ENCODE measurements at regions of chr1 and their contacts with region 1.

Region 1: GRCh38 chr1:42657971-42658879 is at the start of gene PPIH:
- DNase-seq: peak; percentile 94
- H3K4me3 Mint-ChIP-seq: peak within 1 kb of the TSS; percentile 99
- H3K27ac Mint-ChIP-seq: peak within 1 kb of the TSS; percentile 96
- H3K4me1 Mint-ChIP-seq: peaks cover 46% of the 10 kb centered on the region
- H3K27me3 Mint-ChIP-seq: peaks cover 3% of the 10 kb centered on the region
- total RNA-seq, gene PPIH: 89.7 and 94.6 TPM in 2 replicates

Region 2: GRCh38 chr1:42146626-42147320 is 511.5 kb before region 1 on chr1:
- intact Hi-C with region 1: loop called (anchors 5 kb)
- DNase-seq: peak; percentile 56
- H3K4me3 Mint-ChIP-seq: no peak overlapping the region
- H3K27ac Mint-ChIP-seq: no peak overlapping the region
- H3K4me1 Mint-ChIP-seq: no peaks in the 10 kb centered on the region
- H3K27me3 Mint-ChIP-seq: no peaks in the 10 kb centered on the region

Region 3: DNA sequence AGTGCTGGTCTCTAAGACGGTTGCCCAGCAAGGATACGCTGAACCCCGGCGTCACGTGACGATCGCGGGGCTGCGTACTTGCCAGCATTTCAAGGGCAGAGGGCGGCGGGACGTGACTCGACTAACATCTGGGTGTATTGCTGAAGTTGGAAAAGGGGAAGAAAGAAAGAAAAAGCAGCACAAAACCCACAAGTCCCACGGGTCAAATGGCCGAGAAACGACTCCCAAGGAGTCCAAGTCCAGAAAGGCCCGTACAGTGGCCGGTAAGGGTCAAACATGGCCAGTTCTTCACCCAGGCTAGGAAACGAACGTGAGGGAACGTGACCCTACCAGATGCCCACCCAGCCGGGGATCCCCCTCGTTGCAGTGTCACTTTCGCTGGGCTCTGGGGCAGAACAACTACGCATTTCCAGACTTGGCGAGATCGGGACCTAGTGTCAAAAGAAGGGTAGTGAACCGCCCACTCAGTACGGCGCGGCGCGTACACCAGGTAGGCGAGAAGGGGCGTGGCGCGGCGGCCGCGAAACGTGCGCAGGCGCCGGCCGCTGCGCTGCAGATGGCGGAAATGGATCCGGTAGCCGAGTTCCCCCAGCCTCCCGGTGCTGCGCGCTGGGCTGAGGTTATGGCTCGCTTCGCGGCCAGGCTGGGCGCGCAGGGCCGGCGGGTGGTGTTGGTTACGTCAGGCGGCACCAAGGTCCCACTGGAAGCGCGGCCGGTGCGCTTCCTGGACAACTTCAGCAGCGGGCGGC is 202.0 kb before region 1 on chr1 and contains the starts of genes PPCS and ZMYND12:
- intact Hi-C with region 1: loop called (anchors 1 kb)
- DNase-seq: peak; percentile 87
- H3K4me3 Mint-ChIP-seq: peak within 1 kb of the TSS; percentile 95
- H3K27ac Mint-ChIP-seq: peak within 1 kb of the TSS; percentile 98
- H3K4me1 Mint-ChIP-seq: peaks cover 28% of the 10 kb centered on the region
- H3K27me3 Mint-ChIP-seq: no peaks in the 10 kb centered on the region
- total RNA-seq, gene PPCS: 40.1 and 48.0 TPM in 2 replicates
- total RNA-seq, gene ZMYND12: not detected in 2 replicates

Region 4: GRCh38 chr1:42646056-42646455 is 12.2 kb before region 1 on chr1:
- intact Hi-C with region 1: no loop called
- DNase-seq: no peak
- H3K4me3 Mint-ChIP-seq: no peak overlapping the region
- H3K27ac Mint-ChIP-seq: no peak overlapping the region
- H3K4me1 Mint-ChIP-seq: no peaks in the 10 kb centered on the region
- H3K27me3 Mint-ChIP-seq: peaks cover 15% of the 10 kb centered on the region

Region 5: GRCh38 chr1:42816585-42817434 is 158.6 kb after region 1 on chr1 and contains the starts of genes ERMAP and SVBP:
- intact Hi-C with region 1: loop called (anchors 2 kb)
- DNase-seq: peak; percentile 90
- H3K4me3 Mint-ChIP-seq: peak within 1 kb of the TSS; percentile 79
- H3K27ac Mint-ChIP-seq: peak within 1 kb of the TSS; percentile 80
- H3K4me1 Mint-ChIP-seq: peaks cover 19% of the 10 kb centered on the region
- H3K27me3 Mint-ChIP-seq: no peaks in the 10 kb centered on the region
- total RNA-seq, gene ERMAP: 3.4 and 3.7 TPM in 2 replicates
- total RNA-seq, gene SVBP: 6.4 and 8.2 TPM in 2 replicates

Region 6: GRCh38 chr1:42846257-42847110 is 188.3 kb after region 1 on chr1 and contains the start of gene ZNF691:
- intact Hi-C with region 1: loop called (anchors 1 kb)
- DNase-seq: peak; percentile 86
- H3K4me3 Mint-ChIP-seq: peak within 1 kb of the TSS; percentile 97
- H3K27ac Mint-ChIP-seq: peak within 1 kb of the TSS; percentile 78
- H3K4me1 Mint-ChIP-seq: peaks cover 41% of the 10 kb centered on the region
- H3K27me3 Mint-ChIP-seq: no peaks in the 10 kb centered on the region
- total RNA-seq, gene ZNF691: 10.0 and 12.9 TPM in 2 replicates

Region 7: GRCh38 chr1:43197346-43198127 is 539.3 kb after region 1 on chr1:
- intact Hi-C with region 1: no loop called
- DNase-seq: no peak
- H3K4me3 Mint-ChIP-seq: no peak overlapping the region
- H3K27ac Mint-ChIP-seq: no peak overlapping the region
- H3K4me1 Mint-ChIP-seq: no peaks in the 10 kb centered on the region
- H3K27me3 Mint-ChIP-seq: no peaks in the 10 kb centered on the region

Measured in activated T-helper 1 cell treated with anti-CD3 and anti-CD28 coated beads, Interleukin-12 subunit alpha, Interleukin-12 subunit beta, Interleukin-2, Interleukin-4 antibody, amounts not matched to agents 30 ng/mL and 10 ng/mL and 1 ng/mL, durations not matched to agents 14 hours and 24 hours and 36 hours (primary cell).